ENCODE measurements at regions of chr7 and their contacts with region 1.

Region 1: GRCh38 chr7:150737265-150738055 is at the start of gene GIMAP5:
- DNase-seq: peak; percentile 65
- H3K4me3 Mint-ChIP-seq: peak within 1 kb of the TSS; percentile 99
- H3K27ac Mint-ChIP-seq: peak within 1 kb of the TSS; percentile 94
- H3K4me1 Mint-ChIP-seq: peaks cover 80% of the 10 kb centered on the region
- H3K27me3 Mint-ChIP-seq: no peaks in the 10 kb centered on the region
- total RNA-seq, gene GIMAP5: 83.9 to 84.3 TPM

Region 2: GRCh38 chr7:150481186-150481920 is 256.1 kb before region 1 on chr7:
- CTCF ChIA-PET with region 1: interaction called, 3 read pairs
- POLR2A ChIA-PET with region 1: interaction called, 12 read pairs
- DNase-seq: peak; percentile 70
- H3K4me3 Mint-ChIP-seq: peak overlapping the region; percentile 81
- H3K27ac Mint-ChIP-seq: peak overlapping the region; percentile 99
- H3K4me1 Mint-ChIP-seq: peaks cover 95% of the 10 kb centered on the region
- H3K27me3 Mint-ChIP-seq: no peaks in the 10 kb centered on the region

Region 3: DNA sequence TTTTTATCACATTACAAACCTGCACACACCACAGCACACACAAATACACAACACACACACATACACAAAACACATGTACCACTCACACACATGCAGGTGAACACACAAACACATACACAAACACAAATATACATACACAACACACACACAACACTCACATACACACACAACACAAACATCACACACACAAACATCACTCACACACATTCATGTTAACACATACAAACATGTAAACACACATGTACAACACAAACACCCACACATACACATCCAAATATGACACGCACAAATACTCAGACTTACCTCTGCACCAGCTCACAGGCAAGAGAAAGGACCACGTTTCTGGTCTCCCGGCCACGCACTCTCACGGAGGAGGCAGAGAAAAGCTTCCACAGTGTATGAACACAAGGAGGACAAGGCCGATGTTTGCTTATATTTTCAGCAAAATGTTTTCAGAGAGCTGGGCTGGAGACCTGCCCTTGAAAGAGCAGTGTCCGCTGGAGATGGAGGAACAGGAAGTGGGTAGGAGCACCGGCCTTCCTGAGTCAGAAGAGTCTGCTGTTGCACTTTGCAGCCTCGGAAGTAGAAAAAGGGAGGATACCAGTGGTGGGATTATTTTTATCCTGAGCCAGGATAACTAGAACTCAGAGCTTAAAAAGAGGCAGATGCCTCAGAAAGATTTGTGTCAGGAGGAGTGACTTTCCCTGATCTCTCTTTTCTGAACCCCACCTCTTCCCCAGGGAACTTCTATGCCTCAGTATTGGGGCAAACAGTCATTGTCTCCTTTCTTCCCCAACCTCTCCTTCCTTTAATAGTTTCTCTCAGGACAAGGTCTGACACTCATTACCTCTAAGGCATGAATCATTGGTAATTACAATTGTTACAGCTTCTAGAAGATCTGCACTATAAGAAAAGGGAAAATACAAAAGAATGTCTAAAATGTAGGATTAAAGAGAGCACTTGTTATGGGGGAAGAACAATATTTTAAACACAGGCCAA is 105.3 kb before region 1 on chr7 and contains the start of gene GIMAP6:
- CTCF ChIA-PET with region 1: interaction called, 3 read pairs
- POLR2A ChIA-PET with region 1: interaction called, 27 read pairs
- DNase-seq: peak; percentile 56
- H3K4me3 Mint-ChIP-seq: peak within 1 kb of the TSS; percentile 98
- H3K27ac Mint-ChIP-seq: peak within 1 kb of the TSS; percentile 89
- H3K4me1 Mint-ChIP-seq: peaks cover 68% of the 10 kb centered on the region
- H3K27me3 Mint-ChIP-seq: no peaks in the 10 kb centered on the region
- total RNA-seq, gene GIMAP6: 84.9 to 85.9 TPM

Region 4: DNA sequence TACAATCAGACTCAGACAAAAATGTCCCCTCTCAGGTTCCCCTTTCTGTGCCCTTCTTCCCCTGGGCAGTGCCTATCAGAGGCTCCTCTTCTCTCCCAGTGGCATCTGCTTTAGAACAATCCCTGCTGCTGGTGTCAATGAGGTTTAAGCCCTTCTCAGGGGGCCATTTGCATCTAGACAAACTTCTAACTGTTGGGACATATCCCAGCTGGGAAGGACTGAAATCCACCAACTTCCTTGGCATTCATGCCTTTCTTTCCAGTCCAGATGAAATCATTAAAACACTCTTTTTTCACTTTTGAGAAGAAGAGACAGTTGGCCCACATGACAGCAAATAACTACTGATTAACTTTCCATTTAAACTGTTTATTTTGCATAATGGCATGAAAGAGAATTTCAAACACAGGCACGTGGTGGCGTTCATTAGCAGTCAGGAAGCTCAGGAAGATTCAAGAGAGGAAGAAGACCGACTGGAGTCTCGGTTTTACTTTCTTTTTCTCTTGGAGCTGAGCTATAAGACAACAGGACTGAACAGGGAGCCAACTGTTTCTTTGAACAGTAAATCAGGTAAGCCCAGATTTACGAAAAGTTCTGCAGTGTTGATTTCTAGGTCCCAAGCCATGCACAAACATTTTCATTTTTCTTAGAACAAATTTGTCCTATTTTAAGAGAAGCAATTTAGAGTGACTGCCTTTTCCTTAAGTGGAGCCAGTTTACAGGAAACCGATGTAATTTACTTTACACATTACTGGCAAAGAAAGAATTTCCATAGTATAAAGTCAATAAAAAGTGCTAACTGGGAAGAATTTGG is 52.0 kb before region 1 on chr7 and contains the start of gene GIMAP2:
- CTCF ChIA-PET with region 1: interaction called, 3 read pairs
- POLR2A ChIA-PET with region 1: interaction called, 18 read pairs
- DNase-seq: peak; percentile 33
- H3K4me3 Mint-ChIP-seq: peak within 1 kb of the TSS; percentile 100
- H3K27ac Mint-ChIP-seq: peak within 1 kb of the TSS; percentile 98
- H3K4me1 Mint-ChIP-seq: peaks cover 76% of the 10 kb centered on the region
- H3K27me3 Mint-ChIP-seq: no peaks in the 10 kb centered on the region
- total RNA-seq, gene GIMAP2: 113 to 120 TPM

Region 5: DNA sequence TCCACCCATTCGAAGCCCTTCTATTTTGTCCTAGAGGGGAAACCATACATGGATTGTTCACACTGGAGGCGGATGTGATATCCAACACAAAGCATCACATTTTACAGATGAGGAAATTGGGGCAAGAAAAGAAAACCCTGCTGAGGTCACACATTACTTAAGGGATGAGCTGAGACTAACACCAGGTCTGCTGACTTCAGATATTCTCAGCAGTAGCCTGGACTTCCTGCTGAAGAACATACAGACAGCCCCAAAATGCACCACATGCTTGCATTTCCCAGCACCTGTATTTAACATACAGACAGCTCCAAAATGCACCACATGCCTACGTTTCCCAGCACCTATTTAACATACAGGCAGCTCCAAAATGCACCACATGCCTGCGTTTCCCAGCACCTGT is 10.9 kb after region 1 on chr7:
- CTCF ChIA-PET with region 1: interaction called, 3 read pairs
- POLR2A ChIA-PET with region 1: interaction called, 50 read pairs
- DNase-seq: no peak
- H3K4me3 Mint-ChIP-seq: no peak overlapping the region
- H3K27ac Mint-ChIP-seq: peak overlapping the region; percentile 16
- H3K4me1 Mint-ChIP-seq: peaks cover 76% of the 10 kb centered on the region
- H3K27me3 Mint-ChIP-seq: no peaks in the 10 kb centered on the region

Region 6: GRCh38 chr7:150898475-150899011 is 161.1 kb after region 1 on chr7:
- CTCF ChIA-PET with region 1: no interaction called
- POLR2A ChIA-PET with region 1: no interaction called
- DNase-seq: peak; percentile 81
- H3K4me3 Mint-ChIP-seq: no peak overlapping the region
- H3K27ac Mint-ChIP-seq: no peak overlapping the region
- H3K4me1 Mint-ChIP-seq: peaks cover 13% of the 10 kb centered on the region
- H3K27me3 Mint-ChIP-seq: peaks cover 58% of the 10 kb centered on the region